ENCODE measurements at regions of chr15 and their contacts with region 1.

Region 1: GRCh38 chr15:93087825-93088199 is 1.2 kb downstream of the RGMA start:
- DNase-seq: peak; percentile 82
- ATAC-seq: peak; percentile 81
- H3K4me3 Mint-ChIP-seq: peak overlapping the region; percentile 68
- H3K27ac Mint-ChIP-seq: no peak overlapping the region
- H3K4me1 Mint-ChIP-seq: peaks cover 11% of the 10 kb centered on the region
- H3K27me3 Mint-ChIP-seq: peaks cover 54% of the 10 kb centered on the region
- CTCF ChIP-seq: peak; percentile 96

Region 2: DNA sequence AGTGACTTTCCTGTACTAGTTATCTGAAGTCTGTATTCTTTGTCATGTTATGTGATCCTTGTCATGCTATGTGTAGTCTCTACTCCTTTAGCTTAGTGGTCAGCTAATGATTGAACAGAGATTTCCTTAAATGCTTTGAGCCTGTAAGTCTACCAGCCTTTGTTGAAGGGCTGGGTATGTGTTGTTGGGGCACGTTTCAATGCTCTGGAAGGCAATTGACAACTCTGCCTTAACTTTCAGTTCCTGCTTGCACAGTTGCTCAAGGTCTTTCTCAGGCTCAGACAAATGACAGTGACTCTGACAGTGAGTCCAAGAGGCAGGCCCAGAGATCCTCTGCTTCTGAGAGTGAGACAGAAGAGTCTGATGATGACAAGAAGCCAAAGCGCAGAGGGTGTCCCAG is 98.3 kb before region 1 on chr15:
- CTCF ChIA-PET with region 1: no interaction called
- POLR2A ChIA-PET with region 1: no interaction called
- intact Hi-C with region 1: no loop called
- DNase-seq: no peak
- ATAC-seq: no peak
- H3K4me3 Mint-ChIP-seq: no peak overlapping the region
- H3K27ac Mint-ChIP-seq: peak overlapping the region; percentile 32
- H3K4me1 Mint-ChIP-seq: peaks cover 7% of the 10 kb centered on the region
- H3K27me3 Mint-ChIP-seq: no peaks in the 10 kb centered on the region
- CTCF ChIP-seq: no peak

Region 3: DNA sequence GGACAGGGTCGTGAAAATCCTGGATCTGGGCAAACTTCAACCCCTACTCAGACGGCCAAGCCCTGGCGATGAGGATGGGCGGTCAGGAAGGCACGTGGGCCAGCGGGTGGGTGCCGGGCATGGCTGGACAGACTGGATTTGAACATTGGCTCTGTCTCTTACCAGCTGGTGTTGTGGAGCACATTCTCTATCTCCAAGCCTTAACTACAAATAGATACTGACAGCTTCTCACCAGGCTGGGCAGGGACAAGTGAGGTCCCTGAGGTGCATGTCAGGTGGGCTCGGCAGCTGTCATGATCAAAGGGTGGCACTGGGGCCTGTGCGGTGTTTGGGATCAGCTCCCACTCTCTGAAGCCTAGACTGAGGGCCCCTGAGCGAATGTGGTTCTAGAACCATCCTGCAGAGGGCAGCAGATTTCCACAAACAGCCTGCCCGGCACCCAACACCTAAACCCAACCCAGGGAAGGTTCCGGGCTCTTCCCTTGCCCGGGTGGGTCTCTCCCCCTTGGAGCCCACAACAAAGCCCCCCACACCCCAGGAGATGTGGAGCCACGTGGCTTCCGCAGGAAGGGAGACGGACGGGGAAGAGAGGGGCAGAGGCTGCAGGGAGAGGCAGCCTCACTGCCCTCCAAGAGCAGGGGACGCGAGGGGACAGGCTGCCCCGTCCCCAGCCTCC is 57.2 kb before region 1 on chr15:
- CTCF ChIA-PET with region 1: interaction called, 19 read pairs
- POLR2A ChIA-PET with region 1: interaction called, 4 read pairs
- intact Hi-C with region 1: no loop called
- DNase-seq: peak; percentile 79
- ATAC-seq: peak; percentile 88
- H3K4me3 Mint-ChIP-seq: no peak overlapping the region
- H3K27ac Mint-ChIP-seq: no peak overlapping the region
- H3K4me1 Mint-ChIP-seq: peaks cover 36% of the 10 kb centered on the region
- H3K27me3 Mint-ChIP-seq: no peaks in the 10 kb centered on the region
- CTCF ChIP-seq: peak; percentile 91

Region 4: GRCh38 chr15:93060336-93061263 is 27.2 kb before region 1 on chr15:
- CTCF ChIA-PET with region 1: interaction called, 16 read pairs
- POLR2A ChIA-PET with region 1: no interaction called
- intact Hi-C with region 1: no loop called
- DNase-seq: no peak
- ATAC-seq: no peak
- H3K4me3 Mint-ChIP-seq: no peak overlapping the region
- H3K27ac Mint-ChIP-seq: no peak overlapping the region
- H3K4me1 Mint-ChIP-seq: peaks cover 2% of the 10 kb centered on the region
- H3K27me3 Mint-ChIP-seq: peaks cover 7% of the 10 kb centered on the region
- CTCF ChIP-seq: no peak

Region 5: DNA sequence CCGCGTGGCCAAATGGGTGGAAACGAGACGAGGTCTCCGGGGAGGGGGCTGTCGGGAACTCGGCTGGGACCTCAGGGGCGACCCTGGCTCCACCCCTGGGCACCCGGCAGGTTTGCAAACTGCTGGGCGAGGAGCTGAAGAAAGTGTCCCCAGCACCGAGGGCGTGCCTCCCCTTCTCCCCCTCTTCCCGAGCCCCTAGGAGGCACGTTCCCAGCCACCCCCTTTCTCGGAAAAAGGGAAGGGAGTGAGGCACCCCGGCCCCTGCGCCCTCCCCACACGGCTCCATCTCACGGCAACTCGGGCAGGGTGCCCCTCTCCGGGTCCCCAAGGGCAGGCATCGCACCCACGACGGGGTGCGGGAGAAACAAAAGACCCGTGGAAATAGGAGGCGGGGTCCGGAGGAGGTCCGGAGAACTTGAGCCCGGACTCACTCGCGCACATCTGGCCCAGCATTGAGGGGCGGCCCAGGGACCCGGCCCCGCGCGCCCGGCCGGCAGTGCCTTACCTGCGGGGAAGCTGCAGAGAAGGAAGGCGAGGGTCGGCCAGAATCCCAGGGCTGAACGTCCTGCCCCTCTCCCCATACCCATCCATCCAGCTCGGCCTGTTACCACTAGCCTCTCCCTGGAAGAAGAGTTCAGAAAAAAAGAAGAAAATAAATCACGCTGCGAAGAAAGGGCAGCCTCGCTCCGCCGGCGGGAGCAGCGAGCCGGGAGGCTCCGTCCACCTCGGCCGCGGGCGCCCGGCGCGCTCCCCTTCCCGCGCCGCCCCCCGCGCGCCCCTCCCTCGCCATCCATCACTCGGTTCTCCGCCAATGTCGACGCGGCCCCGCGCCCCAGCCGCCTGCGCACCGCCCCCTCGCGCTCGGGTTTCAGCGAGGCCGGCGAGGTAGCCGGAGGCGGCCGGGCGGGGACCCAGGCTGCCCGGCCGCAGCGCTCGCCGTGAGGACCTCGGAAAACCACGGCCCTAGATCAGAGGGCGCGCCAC is 15.1 kb before region 1 on chr15:
- CTCF ChIA-PET with region 1: interaction called, 26 read pairs
- POLR2A ChIA-PET with region 1: interaction called, 3 read pairs
- intact Hi-C with region 1: no loop called
- DNase-seq: no peak
- ATAC-seq: peak; percentile 27
- H3K4me3 Mint-ChIP-seq: peak overlapping the region; percentile 23
- H3K27ac Mint-ChIP-seq: no peak overlapping the region
- H3K4me1 Mint-ChIP-seq: peaks cover 17% of the 10 kb centered on the region
- H3K27me3 Mint-ChIP-seq: peaks cover 53% of the 10 kb centered on the region
- CTCF ChIP-seq: no peak

Region 6: GRCh38 chr15:93102211-93102610 is 14.4 kb after region 1 on chr15:
- CTCF ChIA-PET with region 1: interaction called, 12 read pairs
- POLR2A ChIA-PET with region 1: no interaction called
- intact Hi-C with region 1: no loop called
- DNase-seq: no peak
- ATAC-seq: no peak
- H3K4me3 Mint-ChIP-seq: no peak overlapping the region
- H3K27ac Mint-ChIP-seq: no peak overlapping the region
- H3K4me1 Mint-ChIP-seq: no peaks in the 10 kb centered on the region
- H3K27me3 Mint-ChIP-seq: peaks cover 18% of the 10 kb centered on the region
- CTCF ChIP-seq: no peak

Region 7: GRCh38 chr15:94119923-94120775 is 1032.3 kb after region 1 on chr15:
- CTCF ChIA-PET with region 1: interaction called, 12 read pairs
- POLR2A ChIA-PET with region 1: no interaction called
- intact Hi-C with region 1: no loop called
- DNase-seq: peak; percentile 70
- ATAC-seq: peak; percentile 100
- H3K4me3 Mint-ChIP-seq: no peak overlapping the region
- H3K27ac Mint-ChIP-seq: no peak overlapping the region
- H3K4me1 Mint-ChIP-seq: no peaks in the 10 kb centered on the region
- H3K27me3 Mint-ChIP-seq: no peaks in the 10 kb centered on the region
- CTCF ChIP-seq: peak; percentile 85